HAP-1 (cell line): ENCODE measurements at regions of chr20 and their contacts with region 1.

Region 1: GRCh38 chr20:37081717-37082289 is 14.0 kb downstream of the RBL1 start:
- DNase-seq: peak in 1 of 2 experiments; percentile 14
- H3K4me3 ChIP-seq: no peak overlapping the region
- H3K4me1 ChIP-seq: no peaks in the 10 kb centered on the region
- H3K27me3 ChIP-seq: no peaks in the 10 kb centered on the region

Region 2: DNA sequence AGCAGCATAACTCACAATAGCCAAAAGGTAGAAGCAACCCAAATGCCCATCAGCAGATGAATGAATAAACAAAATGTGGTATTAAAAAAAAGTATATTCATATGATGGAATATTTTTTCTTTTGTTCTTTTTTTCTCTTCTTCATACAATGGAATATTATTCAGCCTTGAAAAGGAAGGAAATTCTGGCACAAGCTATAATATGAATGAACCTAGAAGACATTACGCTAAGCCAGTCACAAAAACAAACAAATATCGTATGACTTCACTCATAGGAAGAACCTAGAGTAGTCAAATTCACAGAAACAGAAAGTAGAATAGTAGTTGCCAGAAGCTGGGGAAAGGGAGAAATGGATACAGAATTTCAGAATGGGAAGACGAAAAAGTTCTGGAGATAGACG is 49.7 kb before region 1 on chr20:
- in situ Hi-C with region 1: loop called (anchors 5 kb)
- DNase-seq: no peak
- H3K4me3 ChIP-seq: no peak overlapping the region
- H3K4me1 ChIP-seq: no peaks in the 10 kb centered on the region
- H3K27me3 ChIP-seq: no peaks in the 10 kb centered on the region